ENCODE measurements at regions of chr19 and their contacts with region 1.

Region 1: DNA sequence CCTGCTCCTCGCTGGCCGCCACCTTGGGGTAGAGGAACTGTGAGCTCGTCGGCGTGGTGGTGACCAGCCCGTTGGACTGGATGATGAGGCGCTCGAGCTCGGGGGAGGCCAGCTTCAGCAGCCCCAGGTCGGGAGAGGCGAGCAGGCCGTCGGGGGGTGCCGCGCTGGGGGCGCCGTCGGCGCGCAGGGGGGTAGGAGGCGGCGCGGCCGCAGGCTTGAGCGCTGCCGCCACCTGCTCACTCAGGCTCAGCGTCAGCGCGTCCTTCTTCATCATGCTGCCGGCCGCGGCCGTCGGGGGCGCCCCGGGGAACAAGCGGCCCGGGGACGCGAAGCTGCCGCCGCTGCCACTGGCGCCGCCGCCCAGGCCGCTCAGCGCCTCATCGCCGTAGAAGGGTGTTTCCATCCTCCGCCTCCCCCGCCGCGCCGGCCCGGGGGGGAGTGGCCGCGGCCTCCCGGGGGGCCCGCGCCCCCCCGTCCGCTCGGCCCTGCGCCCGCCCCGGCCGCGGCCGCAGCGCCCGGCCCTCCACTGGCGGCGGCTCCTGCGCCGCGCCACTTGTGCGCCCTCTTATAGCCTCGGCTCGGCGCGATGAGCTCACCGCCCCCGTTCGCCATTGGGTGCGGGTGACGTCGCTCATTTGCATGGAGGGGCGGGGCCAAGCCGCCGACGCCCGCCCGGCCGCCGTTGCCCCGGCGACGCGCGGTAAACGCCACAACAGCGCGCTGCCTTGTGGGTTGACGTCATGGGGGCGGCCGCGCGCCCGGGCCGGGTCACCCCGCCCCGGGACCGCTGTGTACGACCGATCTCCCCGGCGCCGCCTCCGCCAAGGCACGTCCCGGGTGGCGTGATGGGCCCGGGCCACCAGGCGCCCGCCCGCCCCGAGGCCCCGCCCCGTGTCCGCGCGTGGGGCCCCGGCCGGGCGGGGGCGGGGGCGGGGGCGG is at the start of gene JUND:
- DNase-seq: peak; percentile 100
- ATAC-seq: peak; percentile 63
- H3K4me3 ChIP-seq: peak within 1 kb of the TSS; percentile 77 to 98 (median 94)
- H3K4me3 Mint-ChIP-seq: peak within 1 kb of the TSS; percentile 97
- H3K27ac ChIP-seq: peak within 1 kb of the TSS; percentile 99 to 100
- H3K27ac Mint-ChIP-seq: peak within 1 kb of the TSS; percentile 98
- H3K4me1 ChIP-seq: peaks cover 23 to 43% of the 10 kb centered on the region in 2 donors
- H3K4me1 Mint-ChIP-seq: peaks cover 51% of the 10 kb centered on the region
- H3K27me3 ChIP-seq: no peaks in the 10 kb centered on the region
- H3K27me3 Mint-ChIP-seq: no peaks in the 10 kb centered on the region
- CTCF ChIP-seq: no peak
- total RNA-seq, gene JUND: 608 and 628 TPM in 2 replicates

Region 2: GRCh38 chr19:17496337-17496997 is 784.9 kb before region 1 on chr19:
- CTCF ChIA-PET with region 1: no interaction called
- POLR2A ChIA-PET with region 1: no interaction called
- intact Hi-C with region 1: no loop called
- DNase-seq: peak; percentile 88
- ATAC-seq: peak; percentile 99
- H3K4me3 ChIP-seq: no peak overlapping the region
- H3K4me3 Mint-ChIP-seq: peak overlapping the region; percentile 16
- H3K27ac ChIP-seq: no peak overlapping the region
- H3K27ac Mint-ChIP-seq: no peak overlapping the region
- H3K4me1 ChIP-seq: peaks cover 7 to 21% of the 10 kb centered on the region in 2 donors
- H3K4me1 Mint-ChIP-seq: peaks cover 25% of the 10 kb centered on the region
- H3K27me3 ChIP-seq: no peaks in the 10 kb centered on the region
- H3K27me3 Mint-ChIP-seq: no peaks in the 10 kb centered on the region
- CTCF ChIP-seq: peak; percentile 97

Region 3: GRCh38 chr19:18053576-18054219 is 227.7 kb before region 1 on chr19:
- CTCF ChIA-PET with region 1: no interaction called
- POLR2A ChIA-PET with region 1: no interaction called
- intact Hi-C with region 1: no loop called
- DNase-seq: no peak
- ATAC-seq: no peak
- H3K4me3 ChIP-seq: no peak overlapping the region
- H3K4me3 Mint-ChIP-seq: no peak overlapping the region
- H3K27ac ChIP-seq: no peak overlapping the region
- H3K27ac Mint-ChIP-seq: peak overlapping the region; percentile 76
- H3K4me1 ChIP-seq: peaks cover 10 to 13% of the 10 kb centered on the region in 2 donors
- H3K4me1 Mint-ChIP-seq: peaks cover 24% of the 10 kb centered on the region
- H3K27me3 ChIP-seq: no peaks in the 10 kb centered on the region
- H3K27me3 Mint-ChIP-seq: no peaks in the 10 kb centered on the region
- CTCF ChIP-seq: no peak

Region 4: GRCh38 chr19:18152444-18152816 is 128.9 kb before region 1 on chr19:
- CTCF ChIA-PET with region 1: interaction called, 5 read pairs
- POLR2A ChIA-PET with region 1: interaction called, 18 read pairs
- intact Hi-C with region 1: no loop called
- DNase-seq: peak; percentile 100
- ATAC-seq: peak; percentile 71
- H3K4me3 ChIP-seq: peak overlapping the region; percentile 63 to 88 (median 70)
- H3K4me3 Mint-ChIP-seq: peak overlapping the region; percentile 89
- H3K27ac ChIP-seq: peak overlapping the region; percentile 90 to 93
- H3K27ac Mint-ChIP-seq: peak overlapping the region; percentile 95
- H3K4me1 ChIP-seq: peaks cover 14 to 25% of the 10 kb centered on the region in 2 donors
- H3K4me1 Mint-ChIP-seq: peaks cover 23% of the 10 kb centered on the region
- H3K27me3 ChIP-seq: no peaks in the 10 kb centered on the region
- H3K27me3 Mint-ChIP-seq: no peaks in the 10 kb centered on the region
- CTCF ChIP-seq: peak; percentile 88

Region 5: DNA sequence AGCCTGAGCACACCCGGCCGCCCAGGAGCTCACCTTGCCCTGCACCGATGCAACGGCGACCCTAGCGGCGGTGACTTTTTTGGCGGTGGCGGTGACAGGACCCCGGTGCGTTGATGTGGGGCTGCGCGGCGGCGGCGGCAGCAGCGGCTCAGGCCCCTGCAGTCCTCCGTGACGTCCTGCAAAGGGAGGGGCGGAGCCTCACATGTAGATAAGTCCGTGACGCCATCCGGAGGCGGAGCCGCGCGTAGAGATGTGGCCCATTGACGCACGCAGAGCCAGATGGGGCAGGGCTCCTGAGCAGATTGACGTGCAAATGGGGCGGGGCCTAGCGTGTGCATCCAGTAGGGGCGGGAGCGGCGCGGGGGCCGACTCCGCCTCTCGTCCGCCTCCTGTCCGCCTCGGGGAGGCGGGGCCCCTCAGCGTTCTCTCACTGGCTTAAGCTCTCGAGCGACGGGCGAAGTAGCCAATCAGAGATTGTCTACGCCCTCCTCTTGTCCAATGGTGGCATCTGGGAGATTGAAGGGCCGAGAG is 77.4 kb before region 1 on chr19 and contains the start of gene RAB3A:
- CTCF ChIA-PET with region 1: interaction called, 18 read pairs
- POLR2A ChIA-PET with region 1: interaction called, 21 read pairs
- intact Hi-C with region 1: loop called (anchors 2 kb)
- DNase-seq: peak; percentile 100
- ATAC-seq: peak; percentile 83
- H3K4me3 ChIP-seq: peak within 1 kb of the TSS; percentile 74 to 94 (median 91)
- H3K4me3 Mint-ChIP-seq: peak within 1 kb of the TSS; percentile 95
- H3K27ac ChIP-seq: peak within 1 kb of the TSS; percentile 86 to 98
- H3K27ac Mint-ChIP-seq: peak within 1 kb of the TSS; percentile 96
- H3K4me1 ChIP-seq: peaks cover 15 to 29% of the 10 kb centered on the region in 2 donors
- H3K4me1 Mint-ChIP-seq: peaks cover 28% of the 10 kb centered on the region
- H3K27me3 ChIP-seq: peaks cover 0 to 5% (median 1%) of the 10 kb centered on the region in 4 experiments
- H3K27me3 Mint-ChIP-seq: peaks cover 6% of the 10 kb centered on the region
- CTCF ChIP-seq: no peak
- total RNA-seq, gene RAB3A: 9.6 and 10.4 TPM in 2 replicates

Region 6: DNA sequence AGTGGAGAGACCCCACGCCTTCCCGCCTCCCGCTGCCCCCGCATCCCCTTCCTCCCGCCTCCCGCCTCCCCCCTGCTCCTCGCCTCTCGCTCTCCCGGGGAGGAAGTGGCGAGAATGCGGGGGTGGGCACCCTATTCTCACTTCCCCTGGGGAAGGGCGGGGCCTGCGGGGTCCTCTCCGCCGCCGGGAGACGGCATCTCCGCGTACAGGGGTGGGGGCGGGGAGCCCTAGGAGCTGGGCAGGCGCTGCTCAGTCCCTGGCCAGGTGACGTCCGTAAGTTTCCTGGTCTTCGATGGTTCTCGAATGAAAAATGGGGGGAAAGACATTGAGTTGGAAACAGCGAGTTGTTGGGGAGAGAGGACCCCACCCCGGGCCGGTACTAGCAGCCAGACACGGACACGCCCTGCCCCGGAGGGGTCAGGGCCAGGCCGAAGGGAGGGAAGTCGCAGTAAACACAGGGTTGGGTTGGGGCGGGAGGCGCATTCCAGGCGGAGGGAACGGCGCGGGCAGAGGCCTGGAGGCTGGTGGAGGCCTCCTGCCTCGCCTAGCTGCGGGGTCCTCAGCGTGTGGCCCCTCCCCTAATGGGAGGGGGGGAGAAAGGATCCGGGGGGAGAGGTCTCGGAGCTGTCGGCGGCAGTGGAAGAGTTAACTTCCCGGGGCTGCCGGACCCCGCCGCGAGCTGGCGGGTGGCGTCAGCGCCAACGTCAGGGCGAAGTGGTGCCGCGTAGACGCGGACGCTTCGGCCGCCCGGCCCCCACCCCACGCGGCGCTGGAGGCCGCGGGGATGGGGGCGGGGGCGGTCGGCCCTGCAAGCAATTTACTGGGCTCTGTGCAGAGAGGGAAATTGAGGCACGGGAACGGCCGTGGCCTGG is 10.5 kb after region 1 on chr19:
- CTCF ChIA-PET with region 1: interaction called, 138 read pairs
- POLR2A ChIA-PET with region 1: interaction called, 318 read pairs
- intact Hi-C with region 1: loop called (anchors 1 kb)
- DNase-seq: peak; percentile 95
- ATAC-seq: peak; percentile 58
- H3K4me3 ChIP-seq: peak overlapping the region; percentile 48 to 99 (median 90)
- H3K4me3 Mint-ChIP-seq: peak overlapping the region; percentile 82
- H3K27ac ChIP-seq: peak overlapping the region; percentile 100
- H3K27ac Mint-ChIP-seq: peak overlapping the region; percentile 93
- H3K4me1 ChIP-seq: peaks cover 48 to 68% of the 10 kb centered on the region in 2 donors
- H3K4me1 Mint-ChIP-seq: peaks cover 60% of the 10 kb centered on the region
- H3K27me3 ChIP-seq: no peaks in the 10 kb centered on the region
- H3K27me3 Mint-ChIP-seq: no peaks in the 10 kb centered on the region
- CTCF ChIP-seq: no peak

Region 7: DNA sequence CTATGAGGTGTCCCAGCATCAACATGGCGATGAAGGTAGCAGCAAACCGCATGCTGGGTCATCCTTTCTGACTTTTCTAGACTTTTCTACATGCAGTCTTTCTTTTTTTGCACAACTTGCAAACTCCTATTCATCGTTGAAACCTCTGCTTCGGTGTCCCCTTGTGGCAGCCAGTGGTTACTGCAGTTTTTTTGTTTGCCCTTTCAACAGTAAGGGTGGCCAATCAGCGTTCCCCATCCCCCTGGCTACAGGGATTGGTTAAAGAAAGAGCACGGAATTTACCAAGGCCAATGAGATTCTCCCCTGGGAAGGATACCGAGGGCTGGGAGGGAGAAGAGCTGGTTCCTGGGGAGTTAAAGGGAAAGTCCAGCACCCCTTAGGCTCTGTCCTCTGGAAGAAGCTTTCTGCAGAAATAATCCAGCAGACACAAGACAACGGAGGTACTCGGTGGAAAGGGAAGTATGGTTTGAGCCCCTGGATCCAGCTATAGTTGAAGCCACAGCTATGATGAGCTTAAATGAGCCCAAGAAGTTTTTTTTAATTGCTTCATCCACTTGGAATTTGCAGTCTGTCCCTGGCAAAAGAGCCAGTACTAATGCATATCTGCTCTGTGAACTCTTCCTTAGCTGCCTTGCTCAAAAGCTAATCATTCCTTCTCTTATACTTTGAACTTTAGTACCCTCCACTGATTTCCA is 47.1 kb after region 1 on chr19:
- CTCF ChIA-PET with region 1: interaction called, 259 read pairs
- POLR2A ChIA-PET with region 1: interaction called, 128 read pairs
- intact Hi-C with region 1: loop called (anchors 1 kb)
- DNase-seq: peak; percentile 92
- ATAC-seq: peak; percentile 98
- H3K4me3 ChIP-seq: peak overlapping the region; percentile 16 to 62 (median 32)
- H3K4me3 Mint-ChIP-seq: peak overlapping the region; percentile 57
- H3K27ac ChIP-seq: no peak overlapping the region
- H3K27ac Mint-ChIP-seq: no peak overlapping the region
- H3K4me1 ChIP-seq: peaks cover 11 to 15% of the 10 kb centered on the region in 2 donors
- H3K4me1 Mint-ChIP-seq: peaks cover 16% of the 10 kb centered on the region
- H3K27me3 ChIP-seq: peaks cover 0 to 7% (median 0%) of the 10 kb centered on the region in 4 experiments
- H3K27me3 Mint-ChIP-seq: no peaks in the 10 kb centered on the region
- CTCF ChIP-seq: peak; percentile 87

Region 8: GRCh38 chr19:18373892-18374629 is 92.7 kb after region 1 on chr19:
- CTCF ChIA-PET with region 1: no interaction called
- POLR2A ChIA-PET with region 1: interaction called, 11 read pairs
- intact Hi-C with region 1: no loop called
- DNase-seq: peak; percentile 42
- ATAC-seq: peak; percentile 80
- H3K4me3 ChIP-seq: no peak overlapping the region
- H3K4me3 Mint-ChIP-seq: peak overlapping the region; percentile 51
- H3K27ac ChIP-seq: no peak overlapping the region
- H3K27ac Mint-ChIP-seq: peak overlapping the region; percentile 23
- H3K4me1 ChIP-seq: peaks cover 13 to 17% of the 10 kb centered on the region in 2 donors
- H3K4me1 Mint-ChIP-seq: peaks cover 14% of the 10 kb centered on the region
- H3K27me3 ChIP-seq: peaks cover 0 to 5% (median 0%) of the 10 kb centered on the region in 4 experiments
- H3K27me3 Mint-ChIP-seq: peaks cover 10% of the 10 kb centered on the region
- CTCF ChIP-seq: no peak

Region 9: GRCh38 chr19:18419195-18419698 is 137.9 kb after region 1 on chr19 and contains the start of gene SSBP4:
- CTCF ChIA-PET with region 1: interaction called, 16 read pairs
- POLR2A ChIA-PET with region 1: interaction called, 4 read pairs
- intact Hi-C with region 1: no loop called
- DNase-seq: peak; percentile 88
- ATAC-seq: peak; percentile 64
- H3K4me3 ChIP-seq: peak within 1 kb of the TSS in 4 of 5 experiments; percentile 41 to 67 (median 52)
- H3K4me3 Mint-ChIP-seq: peak within 1 kb of the TSS; percentile 85
- H3K27ac ChIP-seq: no peak within 1 kb of the TSS
- H3K27ac Mint-ChIP-seq: peak within 1 kb of the TSS; percentile 71
- H3K4me1 ChIP-seq: peaks cover 70 to 77% of the 10 kb centered on the region in 2 donors
- H3K4me1 Mint-ChIP-seq: peaks cover 66% of the 10 kb centered on the region
- H3K27me3 ChIP-seq: peaks cover 0 to 50% (median 31%) of the 10 kb centered on the region in 4 experiments
- H3K27me3 Mint-ChIP-seq: peaks cover 31% of the 10 kb centered on the region
- CTCF ChIP-seq: peak; percentile 55
- total RNA-seq, gene SSBP4: 37.0 and 43.5 TPM in 2 replicates